Right ventricle myocardium superior (tissue), 1 donor: ENCODE measurements at regions of chr11 and their contacts with region 1.

Region 1: GRCh38 chr11:85854557-85855340 is 434 bp upstream of the CCDC83 start:
- DNase-seq: peak; percentile 96
- ATAC-seq: peak; percentile 100

Region 2: GRCh38 chr11:85718991-85719807 is 135.6 kb before region 1 on chr11:
- intact Hi-C with region 1: no loop called
- DNase-seq: peak; percentile 56
- ATAC-seq: peak; percentile 85

Region 3: GRCh38 chr11:86291466-86292262 is 436.9 kb after region 1 on chr11:
- intact Hi-C with region 1: loop called (anchors 5 kb)
- DNase-seq: no peak
- ATAC-seq: peak; percentile 49